ENCODE measurements at regions of chr13 and their contacts with region 1.

Region 1: GRCh38 chr13:95234242-95234641 is 67.0 kb downstream of the ABCC4 start:
- DNase-seq: no peak
- ATAC-seq: no peak
- H3K4me3 ChIP-seq: no peak overlapping the region
- H3K27ac ChIP-seq: no peak overlapping the region; the same call in 1 of the 2 replicates
- H3K4me1 ChIP-seq: no peaks in the 10 kb centered on the region; the same call in 1 of the 2 replicates
- H3K27me3 ChIP-seq: no peaks in the 10 kb centered on the region
- CTCF ChIP-seq: no peak

Region 2: GRCh38 chr13:95207769-95208366 is 26.4 kb before region 1 on chr13:
- CTCF ChIA-PET with region 1: no interaction called
- POLR2A ChIA-PET with region 1: no interaction called
- in situ Hi-C with region 1: no loop called
- intact Hi-C with region 1: no loop called
- DNase-seq: no peak
- ATAC-seq: no peak
- H3K4me3 ChIP-seq: no peak overlapping the region
- H3K27ac ChIP-seq: 0 out of 2 replicates have a peak overlapping the region, but pooled peaks have one; percentile 23
- H3K4me1 ChIP-seq: no peaks in the 10 kb centered on the region
- H3K27me3 ChIP-seq: no peaks in the 10 kb centered on the region
- CTCF ChIP-seq: no peak

Region 3: GRCh38 chr13:95642028-95642621 is 407.9 kb after region 1 on chr13:
- CTCF ChIA-PET with region 1: no interaction called
- POLR2A ChIA-PET with region 1: interaction called, 10 read pairs
- in situ Hi-C with region 1: no loop called
- intact Hi-C with region 1: no loop called
- DNase-seq: no peak
- ATAC-seq: no peak
- H3K4me3 ChIP-seq: peak overlapping the region in 1 of 2 experiments; percentile 14; a peak in 1 of 4 replicates
- H3K27ac ChIP-seq: no peak overlapping the region
- H3K4me1 ChIP-seq: 0 out of 2 replicates have a peak, but pooled peaks cover 5% of the 10 kb centered on the region
- H3K27me3 ChIP-seq: no peaks in the 10 kb centered on the region
- CTCF ChIP-seq: no peak

Region 4: GRCh38 chr13:95968906-95969305 is 734.7 kb after region 1 on chr13:
- CTCF ChIA-PET with region 1: no interaction called
- POLR2A ChIA-PET with region 1: no interaction called
- in situ Hi-C with region 1: no loop called
- intact Hi-C with region 1: no loop called
- DNase-seq: no peak
- ATAC-seq: no peak
- H3K4me3 ChIP-seq: no peak overlapping the region
- H3K27ac ChIP-seq: no peak overlapping the region
- H3K4me1 ChIP-seq: no peaks in the 10 kb centered on the region
- H3K27me3 ChIP-seq: no peaks in the 10 kb centered on the region
- CTCF ChIP-seq: no peak